OCI-LY7 (cell line): ENCODE measurements at regions of chr11 and their contacts with region 1.

Region 1: DNA sequence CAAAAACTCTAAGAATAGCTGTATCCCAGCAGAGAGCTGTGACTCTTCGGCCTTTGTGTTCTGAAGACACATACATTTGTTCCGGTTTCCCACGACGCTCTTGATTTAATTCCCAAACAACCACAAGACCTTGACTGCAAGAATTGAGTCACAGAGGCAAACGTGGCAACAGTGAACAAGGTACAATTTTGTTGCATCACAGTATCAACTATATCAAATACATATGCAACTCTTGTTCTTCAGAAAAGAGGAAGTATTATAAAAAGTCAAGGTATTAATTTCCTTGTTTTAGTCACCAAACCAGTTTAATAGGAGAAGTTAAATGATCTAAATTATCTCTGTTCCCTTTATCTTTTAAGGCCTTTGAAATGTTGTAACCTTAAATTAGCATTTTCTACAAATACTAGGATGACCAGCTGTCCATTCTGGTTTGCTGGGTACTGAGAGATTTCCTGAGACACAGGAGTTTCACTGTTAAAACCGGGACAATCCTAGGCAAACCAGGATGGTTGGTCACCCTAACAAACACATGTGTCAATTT is 11.1 kb downstream of the HPS5 start:
- DNase-seq: no peak
- H3K4me3 ChIP-seq: no peak overlapping the region
- H3K27ac ChIP-seq: peak overlapping the region; percentile 38
- H3K4me1 ChIP-seq: peaks cover 14% of the 10 kb centered on the region
- CTCF ChIP-seq: no peak

Region 2: DNA sequence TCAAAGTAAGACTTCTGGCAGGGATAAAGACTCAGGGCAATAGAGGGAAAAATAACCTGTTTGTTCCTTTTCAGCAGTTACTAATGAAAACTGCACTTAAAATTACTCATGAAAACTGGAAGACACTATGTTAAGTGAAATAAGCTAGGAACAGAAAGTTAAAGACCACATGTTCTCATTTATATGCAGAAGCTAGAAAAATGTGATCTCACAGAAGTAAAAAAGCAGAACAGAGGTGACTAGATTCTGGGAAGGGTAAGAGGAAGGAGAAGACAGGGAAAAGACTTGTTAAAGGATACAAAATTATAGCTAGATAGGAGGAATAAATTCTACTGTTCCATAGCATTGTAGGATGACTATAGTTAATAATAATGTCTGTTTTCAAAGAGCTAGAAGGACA is 11.1 kb before region 1 on chr11:
- CTCF ChIA-PET with region 1: interaction called, 3 read pairs
- POLR2A ChIA-PET with region 1: interaction called, 15 read pairs
- intact Hi-C with region 1: no loop called
- DNase-seq: no peak
- H3K4me3 ChIP-seq: no peak overlapping the region
- H3K27ac ChIP-seq: no peak overlapping the region
- H3K4me1 ChIP-seq: no peaks in the 10 kb centered on the region
- CTCF ChIP-seq: no peak